Calu3 (cell line): ENCODE measurements at regions of chr17 and their contacts with region 1.

Region 1: GRCh38 chr17:39777534-39778365 is 40.0 kb downstream of the GRB7 start:
- DNase-seq: no peak
- H3K4me3 Mint-ChIP-seq: no peak overlapping the region
- H3K27ac Mint-ChIP-seq: no peak overlapping the region
- H3K4me1 Mint-ChIP-seq: peaks cover 48% of the 10 kb centered on the region
- H3K27me3 Mint-ChIP-seq: no peaks in the 10 kb centered on the region
- CTCF ChIP-seq: no peak

Region 2: GRCh38 chr17:39568702-39569101 is 209.0 kb before region 1 on chr17:
- CTCF ChIA-PET with region 1: no interaction called
- intact Hi-C with region 1: no loop called
- DNase-seq: no peak
- H3K4me3 Mint-ChIP-seq: no peak overlapping the region
- H3K27ac Mint-ChIP-seq: no peak overlapping the region
- H3K4me1 Mint-ChIP-seq: peaks cover under 1% of the 10 kb centered on the region
- H3K27me3 Mint-ChIP-seq: no peaks in the 10 kb centered on the region
- CTCF ChIP-seq: no peak

Region 3: DNA sequence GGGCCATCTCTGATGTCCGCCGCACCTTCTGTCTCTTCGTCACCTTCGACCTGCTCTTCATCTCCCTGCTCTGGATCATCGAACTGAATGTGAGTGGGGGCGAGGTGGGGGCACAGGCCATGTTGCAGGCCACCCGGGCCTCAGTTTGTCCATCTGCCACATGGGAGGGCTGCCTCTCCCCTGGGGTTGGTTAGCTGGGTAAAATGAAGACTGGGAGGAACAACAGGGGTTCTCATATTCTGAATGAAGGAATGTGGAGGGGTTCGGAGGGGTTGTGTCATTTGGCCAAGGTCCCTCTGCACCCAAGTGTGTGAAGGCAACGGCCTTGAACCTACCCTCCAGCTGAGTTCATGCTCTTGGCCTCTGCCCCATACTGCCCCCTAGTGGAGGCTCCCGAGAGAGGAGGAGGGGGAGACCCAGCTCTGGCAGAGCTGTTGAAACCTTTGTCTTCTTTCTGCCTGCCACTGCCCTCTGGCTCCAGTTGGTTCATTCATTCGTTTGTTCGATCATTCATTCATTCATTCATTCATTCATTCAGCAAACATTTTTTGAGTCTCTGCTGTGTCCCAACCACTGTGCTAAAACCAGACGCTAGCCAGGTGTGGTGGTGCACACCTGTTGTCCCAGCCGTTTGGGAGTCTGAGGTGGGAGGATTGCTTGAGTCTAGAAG is 124.0 kb before region 1 on chr17:
- CTCF ChIA-PET with region 1: interaction called, 254 read pairs
- intact Hi-C with region 1: loop called (anchors 1 kb)
- DNase-seq: peak; percentile 100
- H3K4me3 Mint-ChIP-seq: no peak overlapping the region
- H3K27ac Mint-ChIP-seq: no peak overlapping the region
- H3K4me1 Mint-ChIP-seq: peaks cover 23% of the 10 kb centered on the region
- H3K27me3 Mint-ChIP-seq: no peaks in the 10 kb centered on the region
- CTCF ChIP-seq: no peak

Region 4: DNA sequence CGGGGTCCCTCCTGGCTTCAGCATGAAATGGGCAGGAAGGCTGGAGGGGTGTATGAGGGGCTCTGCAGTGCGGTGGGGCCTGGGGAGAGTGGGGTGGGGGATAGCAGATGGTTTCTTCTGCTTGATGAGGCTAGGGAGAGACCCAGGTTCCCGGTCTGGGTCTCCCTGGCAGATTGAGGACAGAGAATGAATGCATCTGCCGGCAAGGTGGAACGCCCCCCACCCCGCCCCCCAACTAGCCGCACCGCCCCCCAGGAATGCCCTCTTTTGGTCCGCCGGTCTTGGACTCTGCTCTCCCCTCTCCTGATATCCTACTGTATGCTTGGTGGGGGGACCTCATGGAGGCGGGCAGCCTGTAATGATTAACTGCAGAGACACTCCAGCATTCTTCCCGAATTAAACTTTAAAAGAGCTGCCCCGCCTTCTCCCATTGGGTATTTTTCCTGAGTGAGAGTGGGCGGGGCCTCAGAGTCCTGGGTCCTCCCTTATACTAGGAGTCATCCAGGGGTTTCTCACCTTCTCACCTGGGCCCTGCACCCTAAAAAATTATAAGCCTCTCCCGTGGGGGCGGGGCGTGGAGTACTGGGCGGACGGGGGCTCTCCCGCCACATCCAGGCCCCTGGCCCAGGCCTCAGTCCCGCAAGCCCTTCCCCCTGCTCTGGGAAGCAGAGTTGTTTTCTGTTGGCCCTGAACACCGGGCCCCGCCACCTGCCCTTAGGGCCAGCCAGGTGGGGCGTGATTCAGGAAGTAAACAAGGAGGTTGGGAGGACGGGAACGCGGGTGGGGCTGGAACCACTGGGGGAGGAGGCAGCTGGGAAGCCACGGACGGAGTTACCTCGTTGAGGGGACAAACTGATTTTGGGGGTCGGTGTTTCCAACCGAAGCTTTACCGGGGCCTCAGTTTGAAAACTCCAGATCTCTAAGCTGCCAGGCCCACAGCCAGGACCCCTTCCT is 38.5 kb before region 1 on chr17:
- CTCF ChIA-PET with region 1: interaction called, 34,714 read pairs
- intact Hi-C with region 1: loop called (anchors 1 kb)
- DNase-seq: peak; percentile 100
- H3K4me3 Mint-ChIP-seq: peak overlapping the region; percentile 77
- H3K27ac Mint-ChIP-seq: peak overlapping the region; percentile 21
- H3K4me1 Mint-ChIP-seq: peaks cover 54% of the 10 kb centered on the region
- H3K27me3 Mint-ChIP-seq: no peaks in the 10 kb centered on the region
- CTCF ChIP-seq: no peak

Region 5: DNA sequence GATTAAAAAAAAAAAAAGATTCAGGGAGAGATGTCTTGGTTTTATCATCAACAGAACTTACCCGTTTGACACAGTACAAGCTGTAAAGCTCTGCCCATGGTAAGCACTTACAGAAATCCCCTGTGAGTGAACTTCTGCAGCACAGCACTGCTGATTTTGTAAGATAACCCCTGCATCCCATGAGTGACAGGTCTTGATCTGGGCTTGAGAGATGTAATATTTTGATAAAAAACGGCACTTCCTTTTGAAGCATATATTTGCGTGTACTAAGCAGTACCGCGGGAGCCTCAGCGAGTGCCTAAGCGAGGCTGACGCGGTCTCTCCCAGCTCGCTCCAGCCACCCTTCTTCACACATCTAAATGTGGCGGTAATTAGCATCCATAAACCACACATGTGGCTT is 35.9 kb after region 1 on chr17:
- CTCF ChIA-PET with region 1: interaction called, 920 read pairs
- intact Hi-C with region 1: loop called (anchors 1 kb)
- DNase-seq: peak; percentile 64
- H3K4me3 Mint-ChIP-seq: no peak overlapping the region
- H3K27ac Mint-ChIP-seq: no peak overlapping the region
- H3K4me1 Mint-ChIP-seq: peaks cover 19% of the 10 kb centered on the region
- H3K27me3 Mint-ChIP-seq: no peaks in the 10 kb centered on the region
- CTCF ChIP-seq: no peak

Region 6: DNA sequence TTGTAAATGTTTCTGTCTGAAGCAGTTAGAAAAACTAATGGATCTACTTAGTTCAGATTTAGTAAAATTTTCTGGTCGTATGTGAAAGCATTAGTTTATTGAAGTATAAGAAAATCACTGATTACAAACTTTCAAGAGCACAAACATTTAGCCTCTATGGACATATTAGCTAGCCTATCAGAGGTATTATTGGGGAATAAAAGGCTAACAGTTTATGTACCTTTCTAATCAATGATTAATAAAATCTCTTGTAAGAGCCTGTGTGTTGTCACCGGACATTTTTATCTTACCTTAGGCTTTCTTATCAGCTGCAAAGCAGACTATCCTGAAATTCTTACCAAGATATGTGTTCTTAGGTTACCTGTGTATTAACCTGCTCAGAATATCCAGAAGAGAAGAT is 111.5 kb after region 1 on chr17:
- CTCF ChIA-PET with region 1: interaction called, 1,212 read pairs
- intact Hi-C with region 1: loop called (anchors 1 kb)
- DNase-seq: peak; percentile 82
- H3K4me3 Mint-ChIP-seq: no peak overlapping the region
- H3K27ac Mint-ChIP-seq: no peak overlapping the region
- H3K4me1 Mint-ChIP-seq: peaks cover 26% of the 10 kb centered on the region
- H3K27me3 Mint-ChIP-seq: peaks cover 22% of the 10 kb centered on the region
- CTCF ChIP-seq: no peak

Region 7: GRCh38 chr17:39952680-39953470 is 175.1 kb after region 1 on chr17:
- CTCF ChIA-PET with region 1: interaction called, 978 read pairs
- intact Hi-C with region 1: loop called (anchors 1 kb)
- DNase-seq: peak; percentile 100
- H3K4me3 Mint-ChIP-seq: peak overlapping the region; percentile 58
- H3K27ac Mint-ChIP-seq: peak overlapping the region; percentile 18
- H3K4me1 Mint-ChIP-seq: peaks cover 42% of the 10 kb centered on the region
- H3K27me3 Mint-ChIP-seq: peaks cover 15% of the 10 kb centered on the region
- CTCF ChIP-seq: no peak

Region 8: DNA sequence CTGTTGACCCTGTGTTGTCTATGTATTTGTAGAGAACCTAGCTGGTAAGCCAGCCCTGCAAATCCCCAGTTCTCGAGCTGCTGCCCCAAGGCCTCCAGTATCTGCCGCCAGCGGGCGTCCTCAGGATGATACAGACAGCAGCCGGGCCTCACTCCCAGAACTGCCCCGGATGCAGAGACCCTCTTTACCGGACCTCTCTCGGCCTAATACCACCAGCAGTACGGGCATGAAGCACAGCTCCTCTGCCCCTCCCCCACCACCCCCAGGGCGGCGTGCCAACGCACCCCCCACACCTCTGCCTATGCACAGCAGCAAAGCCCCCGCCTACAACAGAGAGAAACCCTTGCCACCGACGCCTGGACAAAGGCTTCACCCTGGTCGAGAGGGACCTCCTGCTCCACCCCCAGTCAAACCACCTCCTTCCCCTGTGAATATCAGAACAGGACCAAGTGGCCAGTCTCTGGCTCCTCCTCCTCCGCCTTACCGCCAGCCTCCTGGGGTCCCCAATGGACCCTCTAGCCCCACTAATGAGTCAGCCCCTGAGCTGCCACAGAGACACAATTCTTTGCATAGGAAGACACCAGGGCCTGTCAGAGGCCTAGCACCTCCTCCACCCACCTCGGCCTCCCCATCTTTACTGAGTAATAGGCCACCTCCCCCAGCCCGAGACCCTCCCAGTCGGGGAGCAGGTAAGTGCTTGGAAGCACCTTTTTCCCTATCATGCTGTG is 486.9 kb after region 1 on chr17:
- CTCF ChIA-PET with region 1: no interaction called
- intact Hi-C with region 1: no loop called
- DNase-seq: no peak
- H3K4me3 Mint-ChIP-seq: no peak overlapping the region
- H3K27ac Mint-ChIP-seq: no peak overlapping the region
- H3K4me1 Mint-ChIP-seq: no peaks in the 10 kb centered on the region
- H3K27me3 Mint-ChIP-seq: no peaks in the 10 kb centered on the region
- CTCF ChIP-seq: no peak